ENCODE measurements at regions of chr19 and their contacts with region 1.

Region 1: GRCh38 chr19:7562646-7563393 is 27.3 kb downstream of the PNPLA6 start:
- DNase-seq: no peak
- H3K4me3 ChIP-seq: no peak overlapping the region
- CTCF ChIP-seq: no peak

Region 2: DNA sequence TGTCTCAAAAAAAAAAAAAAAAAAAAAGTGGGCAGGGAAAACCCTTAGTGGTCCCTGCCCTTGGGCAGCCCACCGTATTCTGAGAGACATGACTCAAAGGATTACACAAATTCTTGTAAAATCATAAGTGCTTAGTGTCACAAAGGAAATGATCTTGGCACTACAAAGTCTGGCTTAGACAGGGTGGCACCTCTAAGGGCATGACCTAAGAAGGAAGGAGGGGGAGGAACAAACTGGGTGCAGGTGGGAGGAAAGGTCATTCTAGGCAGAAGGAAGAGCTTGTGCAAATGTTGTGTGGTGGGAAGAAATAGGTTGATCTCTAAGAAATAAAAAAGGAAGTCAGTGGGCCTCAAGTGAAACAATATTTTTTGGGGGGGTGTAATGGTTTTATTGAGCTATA is 16.9 kb before region 1 on chr19:
- CTCF ChIA-PET with region 1: interaction called, 18 read pairs
- POLR2A ChIA-PET with region 1: no interaction called
- DNase-seq: no peak
- H3K4me3 ChIP-seq: no peak overlapping the region
- CTCF ChIP-seq: no peak

Region 3: DNA sequence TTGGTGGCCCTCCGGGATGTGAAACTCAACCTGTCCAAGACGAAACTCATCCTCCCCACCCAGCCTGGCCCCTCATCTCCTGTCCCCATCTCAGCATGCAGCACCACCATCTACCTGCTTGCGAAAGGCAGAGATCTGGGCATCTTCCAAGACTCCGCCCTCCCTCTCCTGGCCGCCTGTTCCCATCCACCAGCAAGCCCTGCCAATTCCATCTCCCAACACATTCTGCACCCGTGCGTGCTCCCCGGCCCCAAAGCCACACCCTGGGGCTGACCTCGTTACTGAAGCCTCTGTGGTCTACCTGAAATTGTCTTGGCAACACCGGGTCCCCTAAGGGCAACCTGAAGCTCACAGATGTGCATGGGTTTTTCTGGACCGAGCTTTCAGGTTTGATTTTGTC is 19.6 kb after region 1 on chr19:
- CTCF ChIA-PET with region 1: interaction called, 31 read pairs
- POLR2A ChIA-PET with region 1: no interaction called
- DNase-seq: no peak
- H3K4me3 ChIP-seq: no peak overlapping the region
- CTCF ChIP-seq: no peak

Region 4: DNA sequence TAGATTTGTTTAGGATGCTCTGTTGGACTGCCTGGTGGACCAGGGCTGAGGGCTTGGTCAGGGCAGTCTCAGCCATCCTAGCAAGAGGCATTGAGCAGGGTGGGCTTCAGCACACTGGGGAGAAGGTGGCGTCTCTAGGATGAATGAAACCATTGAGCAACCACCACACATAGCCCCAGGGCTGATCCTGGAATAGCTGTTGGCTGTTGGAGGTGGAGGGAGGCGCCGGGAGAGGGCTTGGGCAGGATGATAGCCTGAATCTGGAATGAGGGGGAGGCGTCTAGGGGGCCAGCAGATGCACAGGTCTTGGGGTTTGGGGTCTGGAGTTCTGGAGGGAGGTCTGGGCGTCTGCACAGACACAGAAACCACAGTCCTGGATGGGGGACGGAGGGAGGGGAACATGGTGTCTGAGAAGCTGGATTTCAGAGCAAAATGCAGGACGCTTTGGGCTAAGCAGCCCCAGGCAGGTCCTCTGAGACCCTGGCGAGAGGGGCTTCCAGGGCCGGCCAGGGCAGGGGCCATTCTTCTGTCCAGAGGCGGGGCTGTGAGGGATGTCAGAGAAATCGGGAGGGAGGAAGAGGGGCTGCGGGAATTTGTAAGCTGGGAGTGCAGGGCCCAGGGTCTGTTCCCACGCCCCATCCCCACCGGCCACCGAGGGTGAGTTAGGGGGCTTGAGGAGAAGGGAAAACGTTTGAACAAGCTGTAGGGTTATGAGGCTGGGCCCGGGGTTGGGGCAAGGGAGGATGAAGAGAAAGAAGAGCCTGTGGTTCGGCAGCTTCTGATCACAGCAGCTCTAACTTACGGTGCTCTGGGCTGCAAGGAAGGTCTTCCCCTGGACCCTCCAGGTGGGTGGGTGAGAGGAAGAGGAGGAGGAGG is 123.0 kb after region 1 on chr19:
- CTCF ChIA-PET with region 1: interaction called, 59 read pairs
- POLR2A ChIA-PET with region 1: no interaction called
- DNase-seq: no peak
- H3K4me3 ChIP-seq: no peak overlapping the region
- CTCF ChIP-seq: no peak

Region 5: DNA sequence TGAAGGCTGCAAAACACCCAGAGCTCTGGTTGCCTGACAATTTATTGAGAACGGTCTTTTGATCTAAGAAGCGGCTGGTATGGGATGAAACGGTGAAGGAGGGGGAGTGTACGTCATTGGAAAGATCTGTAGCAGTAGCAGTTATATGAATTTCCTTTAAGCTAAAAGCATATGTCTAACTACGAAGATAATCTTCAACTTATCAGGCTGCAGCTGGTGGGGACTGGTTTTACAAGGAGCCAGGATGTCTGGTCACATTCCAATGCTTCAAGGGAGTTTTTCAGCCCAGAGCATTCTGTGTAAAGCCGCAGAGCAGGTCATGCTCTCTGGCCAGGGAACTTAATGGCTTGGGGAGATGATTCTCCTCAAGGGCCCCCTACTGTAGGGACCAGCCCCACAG is 229.4 kb after region 1 on chr19:
- CTCF ChIA-PET with region 1: interaction called, 152 read pairs
- POLR2A ChIA-PET with region 1: no interaction called
- DNase-seq: no peak
- H3K4me3 ChIP-seq: no peak overlapping the region
- CTCF ChIP-seq: no peak